AG04450 (cell line): ENCODE measurements at regions of chr3 and their contacts with region 1.

Region 1: DNA sequence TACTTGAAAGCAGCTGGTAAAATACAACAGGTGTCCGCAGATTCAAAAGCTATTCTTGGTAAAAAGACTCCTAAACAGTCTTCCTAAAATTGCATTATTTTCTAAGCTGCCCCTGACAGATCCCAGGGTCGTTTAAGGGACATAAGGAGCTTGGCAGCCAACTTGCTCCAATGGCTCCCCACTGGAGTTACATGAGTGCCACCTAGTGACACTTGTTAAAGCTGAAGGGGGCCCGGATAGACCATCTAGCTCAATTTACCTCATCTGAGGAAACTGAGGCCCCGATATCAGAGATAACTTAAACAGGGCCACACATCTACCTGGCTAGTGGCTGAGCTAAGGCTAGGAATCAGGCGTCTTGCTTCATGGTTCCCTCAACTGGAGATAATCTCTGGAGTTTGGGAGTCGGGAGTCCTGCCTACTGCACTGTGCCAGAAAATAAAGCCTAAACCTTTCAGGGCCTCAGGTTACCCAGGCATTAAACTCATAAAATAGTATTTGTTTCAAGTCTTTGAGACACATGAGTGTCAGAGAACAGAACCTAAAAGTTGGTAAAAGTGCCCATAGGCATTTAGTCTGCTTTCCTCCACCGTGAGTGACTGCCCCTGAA is 6.5 kb upstream of the TBC1D23 start:
- DNase-seq: peak; percentile 59
- H3K4me3 ChIP-seq: no peak overlapping the region
- H3K27ac ChIP-seq: no peak overlapping the region
- H3K27me3 ChIP-seq: no peaks in the 10 kb centered on the region
- CTCF ChIP-seq: peak; percentile 81

Region 2: GRCh38 chr3:99833617-99834205 is 420.6 kb before region 1 on chr3:
- CTCF ChIA-PET with region 1: interaction called, 124 read pairs
- POLR2A ChIA-PET with region 1: no interaction called
- DNase-seq: no peak
- H3K4me3 ChIP-seq: no peak overlapping the region
- H3K27ac ChIP-seq: no peak overlapping the region
- H3K27me3 ChIP-seq: no peaks in the 10 kb centered on the region
- CTCF ChIP-seq: no peak

Region 3: GRCh38 chr3:99859825-99860224 is 394.4 kb before region 1 on chr3:
- CTCF ChIA-PET with region 1: interaction called, 11 read pairs
- POLR2A ChIA-PET with region 1: no interaction called
- DNase-seq: peak; percentile 72
- H3K4me3 ChIP-seq: no peak overlapping the region
- H3K27ac ChIP-seq: no peak overlapping the region
- H3K27me3 ChIP-seq: no peaks in the 10 kb centered on the region
- CTCF ChIP-seq: no peak

Region 4: DNA sequence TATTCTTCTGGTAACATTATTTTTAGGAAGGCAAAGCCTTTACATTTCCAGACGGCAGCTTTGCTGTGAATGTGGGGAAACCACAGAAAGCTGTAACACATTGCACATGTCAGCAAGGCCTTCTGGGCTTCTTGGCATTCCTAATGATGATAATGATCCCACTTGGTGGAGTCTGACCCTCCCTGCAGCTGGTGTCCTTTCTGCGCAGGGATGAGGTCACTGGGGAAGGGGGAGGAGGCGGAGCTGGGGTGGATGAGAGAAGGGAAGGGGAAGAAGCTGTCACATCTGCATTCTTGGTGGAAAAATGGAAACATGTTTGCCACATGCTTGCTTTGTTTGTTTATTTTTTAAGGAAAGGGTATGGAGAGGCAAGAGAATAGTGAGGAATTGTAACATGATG is 208.6 kb before region 1 on chr3:
- CTCF ChIA-PET with region 1: interaction called, 19 read pairs
- POLR2A ChIA-PET with region 1: no interaction called
- DNase-seq: peak; percentile 98
- H3K4me3 ChIP-seq: no peak overlapping the region
- H3K27ac ChIP-seq: peak overlapping the region; percentile 73
- H3K27me3 ChIP-seq: no peaks in the 10 kb centered on the region
- CTCF ChIP-seq: no peak

Region 5: GRCh38 chr3:100068826-100069225 is 185.4 kb before region 1 on chr3:
- CTCF ChIA-PET with region 1: interaction called, 20 read pairs
- POLR2A ChIA-PET with region 1: interaction called, 3 read pairs
- DNase-seq: peak; percentile 50
- H3K4me3 ChIP-seq: no peak overlapping the region
- H3K27ac ChIP-seq: no peak overlapping the region
- H3K27me3 ChIP-seq: no peaks in the 10 kb centered on the region
- CTCF ChIP-seq: peak; percentile 75

Region 6: DNA sequence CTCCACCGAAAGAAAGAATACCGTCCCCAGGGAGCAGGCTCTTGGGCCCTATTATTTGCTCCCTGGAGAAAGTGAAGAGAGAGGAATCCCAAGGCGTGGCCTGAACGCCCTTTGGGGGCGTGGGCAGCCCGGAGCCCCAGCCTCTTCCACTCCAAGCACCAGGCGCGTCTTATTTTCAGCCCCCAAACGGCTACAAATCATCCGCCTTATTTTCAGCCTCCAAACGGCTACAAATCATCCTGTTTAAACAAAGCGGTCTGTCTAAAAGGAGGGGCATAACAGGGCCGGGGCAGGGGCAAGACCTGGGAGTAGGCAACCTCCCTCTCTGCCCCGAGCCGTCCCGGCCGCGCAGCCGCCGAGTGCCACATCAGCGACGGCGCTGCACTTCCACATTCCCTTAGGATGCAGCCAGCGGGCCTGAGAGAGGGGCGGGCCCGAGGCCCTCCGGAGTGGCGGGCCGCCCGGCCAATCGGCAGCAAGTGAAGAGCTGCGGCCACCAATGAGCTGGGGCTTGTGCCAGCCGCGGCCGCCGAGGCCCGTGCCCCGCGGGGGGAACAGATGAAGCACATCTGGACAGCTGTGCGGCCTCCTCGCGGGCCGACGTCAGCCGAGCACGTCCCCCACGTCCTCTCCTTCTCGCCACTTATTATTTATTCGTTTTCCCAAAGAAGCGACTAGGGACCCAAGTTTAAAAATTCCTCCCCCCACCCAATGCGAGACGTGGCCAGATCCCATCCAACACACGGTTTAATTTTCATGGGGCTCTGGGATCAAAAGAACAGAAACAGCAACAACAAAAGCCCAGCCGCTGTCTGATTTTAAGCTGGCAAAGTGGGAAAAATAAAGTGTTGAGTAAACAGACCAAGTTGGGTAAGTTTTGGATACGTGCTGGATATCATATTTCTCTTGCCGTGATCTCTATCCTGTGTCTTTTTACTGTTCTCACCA is 238.1 kb after region 1 on chr3 and contains the start of gene TMEM45A:
- CTCF ChIA-PET with region 1: no interaction called
- POLR2A ChIA-PET with region 1: interaction called, 10 read pairs
- DNase-seq: peak; percentile 85
- H3K4me3 ChIP-seq: peak within 1 kb of the TSS; percentile 66
- H3K27ac ChIP-seq: peak within 1 kb of the TSS; percentile 99
- H3K27me3 ChIP-seq: peaks cover 3% of the 10 kb centered on the region
- CTCF ChIP-seq: 0 out of 2 replicates have a peak, but pooled peaks have one; percentile 3
- polyA plus RNA-seq, gene TMEM45A: 33.0 and 42.8 TPM in 2 replicates